ENCODE measurements at regions of chr16 and their contacts with region 1.

Region 1: GRCh38 chr16:30585400-30586189 is at the start of gene ZNF785:
- DNase-seq: peak; percentile 91 to 99
- ATAC-seq: peak; percentile 98 to 100 (median 99)
- H3K4me3 ChIP-seq: peak within 1 kb of the TSS; percentile 63 to 93 (median 78)
- H3K27ac ChIP-seq: peak within 1 kb of the TSS; percentile 67 to 97 (median 94)
- H3K4me1 ChIP-seq: peaks cover 3 to 26% (median 13%) of the 10 kb centered on the region in 9 donors
- H3K27me3 ChIP-seq: no peaks in the 10 kb centered on the region
- CTCF ChIP-seq: peak in 7 of 9 donors; percentile 19 to 54 (median 42)
- total RNA-seq, gene ZNF785: 2.8 to 8.4 (median 5.4) TPM

Region 2: DNA sequence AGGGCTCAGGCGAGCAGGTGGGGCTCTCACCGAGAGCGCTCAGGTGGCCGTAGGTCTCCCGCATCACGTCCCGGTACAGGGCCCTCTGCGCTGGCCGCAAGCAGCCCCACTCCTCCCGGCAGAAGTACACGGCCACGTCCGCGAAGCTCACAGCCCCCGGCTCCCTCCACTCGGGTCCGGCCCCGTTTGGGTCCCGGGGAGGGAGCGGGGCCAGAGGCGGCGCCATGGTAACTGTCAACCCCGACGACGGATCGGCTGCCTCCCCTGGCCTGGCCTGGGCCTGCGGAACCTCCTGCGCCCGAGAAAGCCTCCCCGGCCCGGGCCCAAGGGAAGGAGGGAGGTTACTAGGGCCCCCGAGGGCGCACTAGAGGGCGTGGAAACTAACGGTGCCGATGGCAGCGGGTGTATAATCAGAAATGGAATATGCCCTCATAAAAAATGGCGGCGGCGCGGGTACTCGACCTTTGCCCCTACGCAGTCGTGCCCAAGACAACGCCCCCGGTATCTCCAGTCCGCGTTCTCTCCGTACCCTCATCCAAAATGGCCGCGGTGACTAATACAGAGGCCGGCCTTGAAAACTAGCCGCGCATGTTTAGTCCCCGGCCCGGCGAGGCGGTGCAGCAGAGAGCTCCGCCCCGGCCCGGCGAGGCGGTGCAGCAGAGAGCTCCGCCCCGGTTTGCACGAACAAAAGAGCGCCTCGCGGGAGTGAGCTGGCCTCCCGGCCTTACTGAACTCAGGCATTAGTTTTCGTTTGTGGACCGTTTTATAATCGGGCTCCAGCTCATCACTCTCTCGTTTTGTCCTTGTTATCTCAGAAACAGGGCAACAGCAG is 27.4 kb before region 1 on chr16 and contains the start of gene ZNF764:
- intact Hi-C with region 1: loop called in 1 of 10 experiments (anchors 2 kb)
- DNase-seq: peak; percentile 96 to 99
- ATAC-seq: peak; percentile 95 to 99 (median 97)
- H3K4me3 ChIP-seq: peak within 1 kb of the TSS; percentile 52 to 98 (median 80)
- H3K27ac ChIP-seq: peak within 1 kb of the TSS; percentile 86 to 99 (median 96)
- H3K4me1 ChIP-seq: peaks cover 0 to 64% (median 47%) of the 10 kb centered on the region in 9 donors
- H3K27me3 ChIP-seq: no peaks in the 10 kb centered on the region
- CTCF ChIP-seq: peak in 1 of 9 donors; percentile 12
- total RNA-seq, gene ZNF764: 6.3 to 15.3 (median 10.3) TPM

Region 3: GRCh38 chr16:30628627-30629540 is 43.3 kb after region 1 on chr16:
- intact Hi-C with region 1: loop called in 5 of 10 experiments (anchors 5 to 10 kb)
- DNase-seq: peak; percentile 88 to 89
- ATAC-seq: peak; percentile 74 to 93 (median 87)
- H3K4me3 ChIP-seq: peak overlapping the region in 8 of 10 donors; percentile 13 to 44 (median 22)
- H3K27ac ChIP-seq: peak overlapping the region in 7 of 10 donors; percentile 18 to 74 (median 59)
- H3K4me1 ChIP-seq: peaks cover 0 to 13% (median 0%) of the 10 kb centered on the region in 9 donors
- H3K27me3 ChIP-seq: no peaks in the 10 kb centered on the region
- CTCF ChIP-seq: peak; percentile 82 to 93 (median 90)

Region 4: GRCh38 chr16:30637942-30638341 is 52.3 kb after region 1 on chr16:
- intact Hi-C with region 1: loop called in 3 of 10 experiments (anchors 5 to 10 kb)
- DNase-seq: no peak
- ATAC-seq: no peak
- H3K4me3 ChIP-seq: no peak overlapping the region
- H3K27ac ChIP-seq: no peak overlapping the region
- H3K4me1 ChIP-seq: peaks cover 0 to 25% (median 11%) of the 10 kb centered on the region in 9 donors
- H3K27me3 ChIP-seq: no peaks in the 10 kb centered on the region
- CTCF ChIP-seq: peak in 6 of 9 donors; percentile 12 to 39 (median 27)

Measured in heart right ventricle (tissue), 16 donors.